Activated B cell treated with CpG ODN at 0.5 μM for 24 hours (primary cell): ENCODE measurements at regions of chr18 and their contacts with region 1.

Region 1: DNA sequence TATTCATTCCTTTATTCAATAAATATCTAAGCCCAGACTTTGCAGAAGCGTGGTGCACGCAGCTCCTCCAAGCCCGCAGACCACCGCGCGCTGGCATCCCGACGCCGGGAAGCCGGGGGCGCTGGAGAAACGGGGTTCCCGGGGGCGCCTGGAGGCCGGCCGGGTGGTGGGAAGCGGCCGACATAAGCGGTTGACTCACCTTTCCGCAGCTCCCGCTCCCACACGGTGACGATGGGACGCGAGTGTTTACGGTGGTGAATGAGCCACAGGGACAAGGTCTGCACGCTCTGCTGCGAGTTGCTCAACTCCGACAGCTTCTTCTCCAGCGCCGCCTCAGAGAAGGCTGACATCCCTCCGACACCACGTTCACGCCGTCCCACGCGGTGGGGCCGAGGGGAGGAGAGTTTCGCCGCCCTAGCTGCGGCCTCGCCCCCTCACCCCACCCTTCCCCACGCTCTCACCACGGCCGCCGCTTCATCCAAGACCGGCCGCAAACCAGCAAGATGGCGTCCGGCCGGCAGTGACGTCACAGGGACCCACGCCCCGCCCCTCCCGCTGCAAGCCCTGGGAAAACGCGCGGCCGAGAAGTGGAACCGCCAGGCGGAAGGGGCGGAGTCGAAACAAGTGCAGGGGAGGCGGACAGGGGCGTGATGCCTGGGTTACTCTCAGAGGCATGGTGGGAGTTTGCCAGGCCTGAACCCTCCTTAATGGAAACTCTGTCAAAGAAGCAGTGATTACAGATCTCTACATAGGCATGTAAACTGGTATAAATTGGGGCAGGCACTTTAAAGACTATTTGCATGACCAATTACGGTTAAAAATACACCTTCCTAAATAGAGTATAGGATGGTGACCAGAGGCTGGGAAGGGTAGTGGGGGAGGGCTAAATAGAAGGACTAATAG is at the start of gene RPRD1A:
- DNase-seq: peak; percentile 99
- ATAC-seq: peak; percentile 91
- H3K4me3 Mint-ChIP-seq: peak within 1 kb of the TSS; percentile 93
- H3K27ac Mint-ChIP-seq: peak within 1 kb of the TSS; percentile 88
- H3K4me1 Mint-ChIP-seq: peaks cover 44% of the 10 kb centered on the region
- H3K27me3 Mint-ChIP-seq: no peaks in the 10 kb centered on the region
- CTCF ChIP-seq: no peak
- total RNA-seq, gene RPRD1A: 40.7 and 47.6 TPM in 2 replicates

Region 2: DNA sequence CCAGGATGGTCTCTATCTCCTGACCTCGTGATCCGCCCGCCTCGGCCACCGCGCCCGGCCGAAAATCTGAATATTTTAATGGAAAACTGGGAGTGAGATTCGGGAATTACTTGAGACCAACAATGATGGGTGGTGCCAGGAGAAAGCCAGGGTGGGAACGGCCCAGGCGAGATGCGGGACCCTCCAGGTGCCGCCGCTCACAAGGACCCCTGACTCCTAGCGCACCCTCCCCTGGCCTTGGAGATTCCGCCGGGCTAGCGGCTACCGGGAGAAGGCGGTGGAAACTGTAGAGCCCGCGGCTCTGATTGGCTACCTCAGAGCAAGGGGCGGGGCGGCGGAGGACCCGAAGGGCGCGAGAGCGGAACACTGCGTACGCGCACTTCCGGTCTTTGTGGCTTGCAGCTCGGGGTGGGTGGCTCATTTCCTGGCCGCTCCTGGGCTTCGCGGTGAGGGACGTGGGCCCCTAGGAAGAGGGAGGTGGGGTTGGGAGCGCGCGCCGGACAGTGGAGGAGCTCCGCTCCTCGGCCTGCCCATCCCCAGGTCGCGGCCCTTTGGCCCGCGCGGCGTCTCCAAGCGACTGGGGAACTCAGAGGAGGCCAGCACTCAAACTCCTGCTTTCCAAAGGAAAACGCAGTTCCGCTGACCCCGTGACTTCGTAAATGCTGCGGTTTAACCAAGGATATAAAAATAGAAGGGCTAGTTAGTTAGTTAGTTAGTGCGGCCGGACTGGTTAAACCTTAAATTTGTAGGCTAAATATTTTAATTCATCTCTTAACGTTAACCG is 826.5 kb before region 1 on chr18 and contains the start of gene ZNF397:
- CTCF ChIA-PET with region 1: no interaction called
- POLR2A ChIA-PET with region 1: no interaction called
- intact Hi-C with region 1: loop called (anchors 1 kb)
- DNase-seq: peak; percentile 93
- ATAC-seq: peak; percentile 97
- H3K4me3 Mint-ChIP-seq: peak within 1 kb of the TSS; percentile 97
- H3K27ac Mint-ChIP-seq: peak within 1 kb of the TSS; percentile 98
- H3K4me1 Mint-ChIP-seq: peaks cover 22% of the 10 kb centered on the region
- H3K27me3 Mint-ChIP-seq: no peaks in the 10 kb centered on the region
- CTCF ChIP-seq: no peak
- total RNA-seq, gene ZNF397: 35.2 and 48.7 TPM in 2 replicates

Region 3: DNA sequence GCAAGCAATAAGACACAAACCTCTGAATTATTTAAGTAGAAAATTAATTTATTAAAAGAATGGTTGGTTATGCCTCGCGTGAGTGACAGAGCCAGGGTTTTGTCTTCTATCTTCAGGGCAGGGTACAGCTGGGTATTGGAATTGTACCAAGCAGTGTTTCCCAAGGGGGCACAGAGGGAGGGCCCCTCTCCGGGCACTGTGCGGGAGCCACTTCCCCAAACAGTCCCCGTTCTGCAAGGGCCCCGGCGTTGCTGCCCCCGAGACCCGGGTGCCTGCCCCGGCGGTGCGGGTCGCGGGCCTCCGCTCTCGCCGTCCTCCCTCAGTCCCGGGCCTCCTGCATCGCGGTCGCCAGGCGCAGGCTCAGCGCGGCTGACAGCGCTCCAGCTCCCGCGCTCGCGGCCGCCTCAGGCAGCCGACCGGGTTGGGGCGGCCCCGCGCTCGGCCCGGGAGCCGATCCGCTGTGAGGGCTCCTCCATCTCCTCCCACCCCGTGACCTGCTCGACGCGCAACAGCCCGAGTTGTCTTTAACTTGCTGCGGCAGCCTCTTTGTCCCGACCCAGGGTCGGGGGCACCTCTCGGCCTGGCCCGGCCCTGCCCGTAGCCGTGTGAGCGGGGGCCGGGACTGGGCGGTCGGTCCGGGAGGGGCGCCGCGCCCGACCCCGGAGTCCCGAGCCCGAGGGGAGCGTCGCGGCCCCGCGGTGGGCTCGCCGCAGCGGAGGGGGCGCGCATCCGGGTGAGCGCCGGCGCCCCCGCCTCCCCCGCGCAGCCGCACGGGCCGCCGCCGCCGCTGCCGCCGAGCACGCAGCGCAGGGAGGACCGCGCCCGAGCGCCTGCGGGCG is 486.4 kb before region 1 on chr18:
- CTCF ChIA-PET with region 1: no interaction called
- POLR2A ChIA-PET with region 1: no interaction called
- intact Hi-C with region 1: loop called (anchors 2 kb)
- DNase-seq: peak; percentile 73
- ATAC-seq: peak; percentile 71
- H3K4me3 Mint-ChIP-seq: peak overlapping the region; percentile 79
- H3K27ac Mint-ChIP-seq: peak overlapping the region; percentile 83
- H3K4me1 Mint-ChIP-seq: peaks cover 42% of the 10 kb centered on the region
- H3K27me3 Mint-ChIP-seq: no peaks in the 10 kb centered on the region
- CTCF ChIP-seq: no peak

Region 4: DNA sequence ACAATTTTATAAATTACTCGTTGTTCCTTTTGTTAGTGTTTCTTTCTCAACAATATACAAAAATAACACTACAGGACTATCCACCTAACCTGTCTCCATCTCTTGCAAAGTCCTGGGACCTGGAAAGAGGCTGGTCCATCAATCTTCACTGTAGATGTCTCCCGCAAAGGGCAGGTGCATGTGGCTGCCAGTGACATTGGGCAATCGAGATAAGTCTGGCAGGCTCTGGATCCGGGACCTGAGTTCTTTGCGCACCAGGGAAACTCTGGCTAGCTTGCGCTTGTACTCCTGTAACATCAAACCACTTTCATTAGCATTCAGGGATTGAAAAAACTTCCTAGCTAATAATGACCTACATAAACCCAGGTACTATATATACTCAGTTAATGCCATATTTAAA is 74.3 kb before region 1 on chr18:
- CTCF ChIA-PET with region 1: no interaction called
- POLR2A ChIA-PET with region 1: no interaction called
- intact Hi-C with region 1: no loop called
- DNase-seq: no peak
- ATAC-seq: no peak
- H3K4me3 Mint-ChIP-seq: no peak overlapping the region
- H3K27ac Mint-ChIP-seq: no peak overlapping the region
- H3K4me1 Mint-ChIP-seq: no peaks in the 10 kb centered on the region
- H3K27me3 Mint-ChIP-seq: no peaks in the 10 kb centered on the region
- CTCF ChIP-seq: no peak

Region 5: GRCh38 chr18:36015629-36016028 is 51.7 kb before region 1 on chr18:
- CTCF ChIA-PET with region 1: interaction called, 7 read pairs
- POLR2A ChIA-PET with region 1: interaction called, 4 read pairs
- intact Hi-C with region 1: loop called (anchors 2 kb)
- DNase-seq: no peak
- ATAC-seq: peak; percentile 75
- H3K4me3 Mint-ChIP-seq: no peak overlapping the region
- H3K27ac Mint-ChIP-seq: peak overlapping the region; percentile 12
- H3K4me1 Mint-ChIP-seq: peaks cover 26% of the 10 kb centered on the region
- H3K27me3 Mint-ChIP-seq: no peaks in the 10 kb centered on the region
- CTCF ChIP-seq: no peak

Region 6: GRCh38 chr18:36047521-36047920 is 19.8 kb before region 1 on chr18:
- CTCF ChIA-PET with region 1: no interaction called
- POLR2A ChIA-PET with region 1: interaction called, 9 read pairs
- intact Hi-C with region 1: loop called (anchors 2 kb)
- DNase-seq: no peak
- ATAC-seq: peak; percentile 45
- H3K4me3 Mint-ChIP-seq: no peak overlapping the region
- H3K27ac Mint-ChIP-seq: peak overlapping the region; percentile 60
- H3K4me1 Mint-ChIP-seq: peaks cover 66% of the 10 kb centered on the region
- H3K27me3 Mint-ChIP-seq: no peaks in the 10 kb centered on the region
- CTCF ChIP-seq: no peak

Region 7: DNA sequence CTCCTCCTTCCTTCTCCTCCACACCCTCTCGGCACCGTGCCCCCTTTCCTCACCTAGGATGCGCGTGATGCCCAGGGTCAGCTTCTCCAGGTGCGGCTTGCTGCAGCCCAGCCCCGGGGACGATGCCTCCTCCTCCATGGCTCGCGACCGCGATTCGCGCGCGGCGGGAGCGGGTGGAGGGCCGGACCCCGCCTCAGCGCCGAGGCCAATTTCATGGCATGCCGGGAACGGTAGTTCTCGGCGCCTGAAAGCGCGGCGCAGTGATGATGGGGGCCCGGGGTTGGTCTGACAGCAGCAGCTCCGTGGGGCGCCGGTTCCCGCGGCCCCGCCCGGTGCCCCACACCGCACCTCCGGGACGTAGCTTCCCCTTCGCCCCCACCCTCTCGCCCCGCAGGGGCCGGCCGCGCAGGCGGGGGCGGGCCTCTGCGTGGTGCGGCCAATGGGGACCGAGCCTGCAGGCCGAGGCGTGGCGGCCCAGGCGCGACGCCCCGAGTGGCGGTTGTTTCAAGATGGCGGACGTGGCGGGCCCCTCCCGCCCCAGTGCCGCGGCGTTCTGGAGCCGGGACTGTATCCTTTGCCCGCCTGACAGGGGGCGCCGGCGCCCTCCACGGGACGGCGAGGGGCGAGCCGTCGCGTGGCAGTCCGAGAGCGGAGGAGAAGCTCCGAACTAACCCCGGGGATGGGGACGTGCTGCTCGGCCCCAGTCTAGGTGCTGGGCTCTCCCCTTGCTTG is 761.5 kb after region 1 on chr18 and contains the starts of genes KIAA1328 and TPGS2:
- CTCF ChIA-PET with region 1: no interaction called
- POLR2A ChIA-PET with region 1: interaction called, 3 read pairs
- intact Hi-C with region 1: loop called (anchors 5 kb)
- DNase-seq: peak; percentile 88
- ATAC-seq: peak; percentile 91
- H3K4me3 Mint-ChIP-seq: peak within 1 kb of the TSS; percentile 94
- H3K27ac Mint-ChIP-seq: peak within 1 kb of the TSS; percentile 84
- H3K4me1 Mint-ChIP-seq: peaks cover 31% of the 10 kb centered on the region
- H3K27me3 Mint-ChIP-seq: no peaks in the 10 kb centered on the region
- CTCF ChIP-seq: no peak
- total RNA-seq, gene KIAA1328: 11.7 and 12.9 TPM in 2 replicates
- total RNA-seq, gene TPGS2: 42.1 and 45.1 TPM in 2 replicates